Activated CD4-positive, alpha-beta T cell treated with anti-CD3 and anti-CD28 coated beads for 36 hours (primary cell): ENCODE measurements at regions of chr1 and their contacts with region 1.

Region 1: GRCh38 chr1:206814716-206815341 is 42.5 kb upstream of the IL10 start:
- DNase-seq: no peak
- ATAC-seq: no peak
- H3K4me3 Mint-ChIP-seq: no peak overlapping the region
- H3K27ac Mint-ChIP-seq: no peak overlapping the region
- H3K4me1 Mint-ChIP-seq: peaks cover 26% of the 10 kb centered on the region
- H3K27me3 Mint-ChIP-seq: peaks cover 2% of the 10 kb centered on the region

Region 2: DNA sequence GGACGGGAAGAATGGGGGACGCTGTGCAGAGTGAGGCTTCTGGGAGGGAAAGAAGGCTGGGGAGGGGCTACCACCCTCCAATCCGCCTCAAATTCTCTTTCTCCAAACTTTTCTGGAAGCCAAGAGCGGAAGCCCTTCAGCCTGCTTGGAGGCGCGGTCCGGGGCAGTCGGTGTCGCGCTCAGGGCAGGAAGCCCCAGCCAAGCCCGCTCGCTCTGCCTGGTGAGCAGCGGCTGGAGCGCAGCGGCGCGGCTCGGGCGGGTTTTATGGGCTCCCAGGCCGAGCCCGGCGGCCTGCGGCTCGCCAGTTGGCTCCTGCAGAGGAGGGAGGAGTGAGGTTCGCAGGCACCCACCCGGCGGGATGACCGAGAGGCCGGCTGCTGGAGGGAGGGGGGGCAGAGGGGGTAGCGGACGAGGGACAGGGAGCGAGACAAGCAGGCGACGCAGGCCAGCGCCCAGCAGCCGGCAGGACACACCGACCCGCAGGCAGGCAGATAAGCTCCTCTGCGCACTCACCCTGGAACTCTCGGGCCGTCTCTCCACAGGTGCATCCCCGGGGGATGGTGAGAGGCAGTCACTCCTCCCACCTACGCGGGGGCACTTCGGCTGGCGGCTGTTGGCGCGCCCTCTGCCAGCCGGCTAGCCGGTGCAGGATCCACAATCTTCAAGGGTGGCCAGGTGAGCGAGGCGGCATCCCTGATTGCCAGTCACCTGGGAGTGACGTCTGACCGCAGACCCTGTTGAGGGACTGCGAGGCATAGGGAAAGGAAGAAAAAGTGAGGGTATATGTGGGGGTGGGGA is 697.5 kb before region 1 on chr1 and contains the start of gene AVPR1B:
- CTCF ChIA-PET with region 1: no interaction called
- POLR2A ChIA-PET with region 1: no interaction called
- intact Hi-C with region 1: no loop called
- DNase-seq: peak; percentile 68
- ATAC-seq: peak; percentile 86
- H3K4me3 Mint-ChIP-seq: no peak within 1 kb of the TSS
- H3K27ac Mint-ChIP-seq: no peak within 1 kb of the TSS
- H3K4me1 Mint-ChIP-seq: peaks cover 8% of the 10 kb centered on the region
- H3K27me3 Mint-ChIP-seq: peaks cover 38% of the 10 kb centered on the region
- total RNA-seq, gene AVPR1B: not detected

Region 3: DNA sequence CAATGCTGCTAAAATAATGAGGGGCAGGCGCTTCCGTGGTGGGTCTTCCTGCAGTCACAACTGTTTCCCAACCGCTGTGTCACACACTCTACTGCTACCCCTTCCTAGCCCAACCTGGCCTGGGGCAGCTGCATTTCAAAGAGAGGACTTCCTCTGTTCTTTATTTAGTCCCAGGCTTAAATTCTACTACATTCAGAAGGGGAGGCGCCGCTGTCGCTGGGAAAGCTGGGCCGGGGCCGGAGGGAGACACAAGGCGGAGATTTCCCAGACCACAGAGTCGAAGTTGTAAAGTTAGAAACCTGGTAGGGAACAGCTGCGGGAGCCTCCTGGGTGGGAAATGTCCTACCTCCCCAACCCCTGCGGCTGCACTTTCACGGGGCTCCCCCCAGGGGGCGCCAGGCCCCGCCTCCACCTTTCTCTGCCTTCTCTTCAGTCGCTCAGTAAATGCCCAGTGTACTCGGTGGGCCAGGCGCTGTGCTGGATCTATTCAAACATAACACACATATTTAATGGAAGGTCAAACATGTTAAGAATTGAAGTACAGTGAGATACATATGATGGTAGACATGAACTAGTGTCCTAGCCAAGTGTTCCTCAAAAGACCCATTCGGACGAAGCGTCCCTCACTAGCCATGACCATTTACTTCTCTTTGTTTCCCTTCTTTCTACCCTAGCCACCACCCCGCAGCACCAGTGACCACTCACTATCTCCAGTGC is 156.4 kb before region 1 on chr1:
- CTCF ChIA-PET with region 1: no interaction called
- POLR2A ChIA-PET with region 1: no interaction called
- intact Hi-C with region 1: no loop called
- DNase-seq: peak; percentile 72
- ATAC-seq: peak; percentile 49
- H3K4me3 Mint-ChIP-seq: no peak overlapping the region
- H3K27ac Mint-ChIP-seq: no peak overlapping the region
- H3K4me1 Mint-ChIP-seq: peaks cover 21% of the 10 kb centered on the region
- H3K27me3 Mint-ChIP-seq: peaks cover 23% of the 10 kb centered on the region

Region 4: DNA sequence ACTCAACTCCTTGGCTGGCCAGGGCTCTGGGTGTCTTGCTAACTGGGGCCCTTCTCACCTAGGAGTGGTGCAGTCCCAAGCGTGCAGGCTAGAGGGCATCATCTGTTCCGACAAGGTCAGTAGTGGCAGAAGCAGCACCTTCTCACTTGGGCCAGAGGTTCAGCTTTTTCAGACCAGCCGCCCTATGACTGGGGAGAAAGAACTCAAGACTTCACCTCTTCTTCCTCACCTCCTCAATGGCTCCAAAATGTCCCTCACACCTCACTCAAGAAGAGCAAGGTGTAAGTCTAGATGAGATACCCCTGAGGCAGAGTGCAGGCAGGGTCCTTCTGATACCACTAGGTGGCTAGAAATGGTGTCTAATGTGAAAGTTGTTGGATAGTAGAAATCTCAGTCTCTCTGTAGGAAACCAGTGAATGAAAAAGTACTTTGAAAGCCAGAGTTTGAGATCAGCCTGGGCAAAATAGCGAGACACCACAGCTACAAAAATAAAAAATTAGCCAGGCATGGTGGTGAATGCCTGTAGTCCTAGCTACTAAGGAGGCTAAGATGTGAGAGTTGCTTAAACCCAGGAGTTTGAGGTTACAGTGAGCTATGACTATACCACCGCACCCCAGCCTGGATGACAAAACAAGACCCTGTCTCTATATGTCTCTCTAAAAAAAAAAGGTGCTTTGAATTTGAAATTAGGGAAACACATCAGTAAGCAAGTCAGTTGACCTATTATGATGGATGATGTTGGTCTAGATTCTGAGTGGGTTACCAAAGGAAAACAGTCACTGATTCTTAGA is 42.0 kb after region 1 on chr1:
- CTCF ChIA-PET with region 1: interaction called, 3 read pairs
- POLR2A ChIA-PET with region 1: no interaction called
- intact Hi-C with region 1: loop called in 1 of 2 experiments (anchors 2 kb)
- DNase-seq: peak; percentile 39
- ATAC-seq: peak; percentile 81
- H3K4me3 Mint-ChIP-seq: no peak overlapping the region
- H3K27ac Mint-ChIP-seq: no peak overlapping the region
- H3K4me1 Mint-ChIP-seq: peaks cover 19% of the 10 kb centered on the region
- H3K27me3 Mint-ChIP-seq: peaks cover 9% of the 10 kb centered on the region